Posterior vena cava (tissue), 2 donors: ENCODE measurements at regions of chr2 and their contacts with region 1.

Region 1: GRCh38 chr2:177148477-177149154 is 64.0 kb upstream of the HNRNPA3 start:
- DNase-seq: peak; percentile 89

Region 2: GRCh38 chr2:176126929-176127773 is 1021.5 kb before region 1 on chr2:
- intact Hi-C with region 1: loop called (anchors 2 to 5 kb)
- DNase-seq: no peak

Region 3: DNA sequence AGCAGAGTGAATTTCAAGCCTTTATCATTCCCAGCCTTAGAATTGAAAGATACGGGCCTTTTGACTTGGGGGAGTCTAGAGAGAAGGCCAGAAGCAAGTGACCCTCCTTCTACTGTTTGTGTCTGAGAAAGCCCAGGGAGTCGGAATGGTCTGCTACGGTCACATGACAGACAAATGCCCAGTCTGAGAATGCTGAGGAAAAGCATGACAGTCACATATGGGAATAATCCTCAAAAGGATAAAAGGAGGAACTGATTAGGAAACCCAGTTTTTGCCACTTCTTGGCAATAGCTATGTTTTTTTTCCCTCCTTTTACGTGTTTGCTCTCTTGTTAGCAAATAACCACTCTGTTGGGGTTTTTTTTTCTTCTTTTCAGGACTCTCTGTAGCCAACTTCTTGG is 25.9 kb after region 1 on chr2:
- intact Hi-C with region 1: no loop called
- DNase-seq: no peak